Activated CD4-positive, alpha-beta T cell treated with anti-CD3 and anti-CD28 coated beads for 36 hours (primary cell): ENCODE measurements at regions of chr19 and their contacts with region 1.

Region 1: DNA sequence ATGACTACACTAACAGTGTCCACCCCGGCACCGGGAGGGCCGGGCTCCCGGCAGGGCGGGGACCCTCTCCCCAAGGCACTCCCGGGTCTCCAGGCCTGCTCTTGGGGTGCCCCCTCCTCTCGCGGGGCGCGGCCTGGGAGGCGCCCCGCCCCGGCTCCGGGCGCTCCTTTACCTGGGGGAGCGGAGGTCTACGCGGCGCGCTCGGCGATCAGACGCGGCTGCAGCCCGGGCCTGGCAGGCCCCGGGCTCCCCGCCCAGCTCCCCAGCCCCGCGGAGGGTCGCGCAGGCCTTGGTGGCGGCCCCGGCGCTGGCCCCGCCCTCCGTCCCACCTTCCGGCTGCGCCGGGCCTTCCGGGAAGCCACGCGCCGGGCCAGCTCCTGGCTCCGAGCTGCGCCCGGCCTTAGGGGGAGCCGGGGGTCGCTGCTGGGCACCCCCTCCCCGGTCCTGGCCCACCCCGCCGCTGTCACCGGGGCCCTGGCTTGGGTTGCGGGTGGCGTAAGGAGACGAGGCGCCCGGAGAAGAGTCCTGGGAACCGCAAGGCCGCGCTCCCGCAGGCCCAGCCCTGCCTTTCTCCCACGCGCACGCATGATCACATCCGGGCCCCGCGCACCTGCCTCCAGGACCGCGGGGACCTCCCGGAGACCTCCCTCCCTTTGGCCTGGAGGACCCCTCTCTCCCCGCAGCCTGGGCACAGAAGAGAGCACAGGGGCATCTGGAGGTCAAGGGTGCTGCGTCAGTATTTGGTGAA is at the start of gene C19orf12:
- DNase-seq: peak; percentile 82
- ATAC-seq: peak; percentile 56
- H3K4me3 Mint-ChIP-seq: peak within 1 kb of the TSS; percentile 92
- H3K27ac Mint-ChIP-seq: peak within 1 kb of the TSS; percentile 99
- H3K4me1 Mint-ChIP-seq: peaks cover 52% of the 10 kb centered on the region
- H3K27me3 Mint-ChIP-seq: no peaks in the 10 kb centered on the region
- total RNA-seq, gene C19orf12: 26.7 to 35.7 TPM

Region 2: DNA sequence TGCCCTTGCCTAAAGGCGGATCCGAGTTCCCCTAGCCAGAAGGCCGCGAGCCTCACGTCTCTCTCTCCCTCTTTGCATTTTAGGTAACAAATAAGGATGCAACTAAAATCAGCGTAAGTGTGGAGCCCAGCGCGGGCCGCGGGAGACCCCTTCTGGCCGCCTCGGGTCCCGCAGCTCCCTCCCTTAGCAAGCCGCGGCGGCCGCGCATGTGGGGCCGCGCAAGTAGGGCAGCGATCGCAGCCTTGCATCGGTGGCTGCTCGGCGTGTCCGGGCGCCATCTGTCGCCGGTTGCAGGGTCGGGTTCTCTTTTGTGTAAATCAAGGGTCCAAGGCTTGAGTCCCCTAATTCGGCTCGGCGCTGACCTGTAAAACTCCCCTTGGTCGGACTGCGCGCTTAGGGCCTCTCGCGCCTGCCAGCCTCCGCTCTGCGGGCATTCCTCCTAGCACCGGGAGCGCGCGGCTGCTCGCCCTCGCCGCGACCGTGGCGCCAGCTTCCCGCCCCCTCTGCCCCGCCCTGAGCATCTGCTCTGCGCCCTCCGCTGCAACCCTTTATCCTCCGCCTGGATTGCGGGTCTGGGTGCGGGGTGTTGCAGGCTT is 186.7 kb before region 1 on chr19:
- CTCF ChIA-PET with region 1: interaction called, 3 read pairs
- POLR2A ChIA-PET with region 1: no interaction called
- intact Hi-C with region 1: loop called in 1 of 2 experiments (anchors 2 kb)
- DNase-seq: peak; percentile 89
- ATAC-seq: peak; percentile 84
- H3K4me3 Mint-ChIP-seq: peak overlapping the region; percentile 52
- H3K27ac Mint-ChIP-seq: no peak overlapping the region
- H3K4me1 Mint-ChIP-seq: peaks cover 22% of the 10 kb centered on the region
- H3K27me3 Mint-ChIP-seq: peaks cover 63% of the 10 kb centered on the region

Region 3: DNA sequence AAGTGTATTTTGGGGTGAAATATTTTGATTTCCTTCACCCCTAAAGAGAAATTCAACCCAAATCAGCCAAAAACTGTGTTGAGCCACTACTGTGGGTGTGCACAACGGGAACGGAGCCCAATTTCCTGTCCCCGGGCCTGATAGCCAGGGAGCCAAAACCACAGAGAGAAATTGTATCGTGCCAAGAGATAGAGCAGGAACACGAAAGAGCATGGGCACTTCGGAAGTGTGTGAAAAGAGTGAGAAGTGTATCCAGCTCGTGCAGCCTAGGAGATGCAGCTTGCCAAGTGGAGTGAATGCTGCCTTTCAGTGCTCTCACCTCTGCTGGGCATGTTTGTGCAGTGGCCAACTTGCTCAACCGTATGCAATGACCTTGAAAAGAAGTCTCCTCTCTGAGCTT is 69.2 kb before region 1 on chr19:
- CTCF ChIA-PET with region 1: no interaction called
- POLR2A ChIA-PET with region 1: no interaction called
- intact Hi-C with region 1: no loop called
- DNase-seq: peak; percentile 26
- ATAC-seq: peak; percentile 44
- H3K4me3 Mint-ChIP-seq: no peak overlapping the region
- H3K27ac Mint-ChIP-seq: peak overlapping the region; percentile 48
- H3K4me1 Mint-ChIP-seq: peaks cover 16% of the 10 kb centered on the region
- H3K27me3 Mint-ChIP-seq: peaks cover 2% of the 10 kb centered on the region

Region 4: DNA sequence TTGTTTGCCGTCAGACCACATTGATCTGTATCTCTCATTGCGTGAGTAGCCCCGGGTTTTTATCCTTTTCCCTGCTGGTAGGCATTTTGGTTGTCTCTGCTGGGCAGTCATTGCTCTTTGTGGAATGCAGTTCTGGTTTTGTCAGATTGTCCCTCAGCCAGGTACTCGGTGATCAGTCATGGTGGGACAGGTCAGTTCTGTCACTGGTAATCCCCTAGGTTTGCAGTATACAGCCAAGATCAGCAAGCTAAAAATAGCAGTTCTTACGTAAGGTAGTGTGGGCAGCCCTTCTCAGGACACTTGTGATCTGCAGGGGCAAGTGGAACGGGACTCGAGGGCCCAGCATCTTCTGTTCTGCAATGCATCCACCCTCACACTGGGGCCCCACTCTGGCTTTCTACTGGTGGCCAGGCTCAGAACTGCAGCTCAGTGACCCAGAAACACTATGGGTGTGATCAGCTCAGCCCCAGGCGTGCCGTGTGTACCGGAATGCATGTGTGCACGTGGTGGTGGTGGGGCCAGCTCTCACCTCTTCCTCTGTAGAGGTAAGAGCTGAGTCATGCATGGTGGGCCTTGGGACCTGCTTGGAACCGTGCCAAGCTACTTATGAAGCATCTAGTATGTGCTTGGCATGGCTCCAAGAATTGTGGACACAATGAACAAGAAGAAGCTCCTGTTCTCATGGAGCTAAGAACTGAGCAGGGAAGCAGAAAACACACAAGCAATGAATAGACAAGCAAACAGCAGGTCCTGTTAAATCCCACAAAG is 43.5 kb before region 1 on chr19:
- CTCF ChIA-PET with region 1: interaction called, 55 read pairs
- POLR2A ChIA-PET with region 1: no interaction called
- intact Hi-C with region 1: loop called in 1 of 2 experiments (anchors 1 kb)
- DNase-seq: peak; percentile 94
- ATAC-seq: peak; percentile 70
- H3K4me3 Mint-ChIP-seq: peak overlapping the region; percentile 59
- H3K27ac Mint-ChIP-seq: peak overlapping the region; percentile 96
- H3K4me1 Mint-ChIP-seq: peaks cover 90% of the 10 kb centered on the region
- H3K27me3 Mint-ChIP-seq: no peaks in the 10 kb centered on the region

Region 5: DNA sequence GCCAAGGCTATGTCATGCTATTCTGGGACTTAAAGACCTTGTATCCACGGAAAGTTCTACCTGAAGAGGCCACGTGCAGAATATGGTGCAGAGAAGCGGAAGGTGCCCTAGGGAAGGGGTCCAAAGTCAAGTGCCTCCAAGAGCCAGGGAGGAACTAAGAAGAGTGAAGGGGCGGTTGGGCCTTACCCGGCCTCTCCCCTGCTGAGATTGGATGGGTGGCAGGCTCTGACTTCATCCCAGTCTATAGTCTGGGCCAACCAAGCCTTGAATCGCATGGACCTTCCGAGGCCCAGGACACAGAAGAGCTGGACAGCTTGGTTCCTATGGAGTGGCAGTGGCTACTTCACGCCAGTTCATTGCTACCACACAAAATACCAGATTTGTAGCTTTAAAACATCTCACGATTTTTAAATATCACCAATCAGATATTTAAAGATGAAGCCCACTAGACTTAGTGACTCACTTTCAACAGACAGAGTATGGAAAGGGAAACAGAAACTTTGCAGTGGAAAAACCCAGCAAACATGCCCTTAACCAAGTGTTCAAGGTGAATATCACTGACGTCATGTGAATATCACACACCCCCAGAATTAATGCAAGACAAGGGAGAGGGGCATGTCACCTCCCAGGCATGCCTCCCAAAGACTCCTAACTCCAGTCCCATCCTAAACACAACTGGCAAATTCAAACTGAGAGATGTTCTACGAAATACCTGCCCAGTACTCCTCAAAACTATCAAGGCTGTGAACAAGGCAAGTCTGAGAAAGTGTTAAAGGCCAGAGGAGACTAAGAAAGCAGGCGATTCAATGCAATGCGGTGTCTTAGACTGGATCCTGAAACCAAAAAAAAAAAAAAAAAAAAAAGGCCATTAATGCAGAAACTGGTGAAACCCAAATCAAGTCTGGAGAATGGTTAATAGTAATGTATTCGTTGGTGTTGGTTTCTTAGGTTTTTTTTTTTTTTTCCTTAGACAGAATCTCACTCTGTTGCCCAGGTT is 10.3 kb before region 1 on chr19:
- CTCF ChIA-PET with region 1: interaction called, 14 read pairs
- POLR2A ChIA-PET with region 1: interaction called, 7 read pairs
- intact Hi-C with region 1: loop called (anchors 1 kb)
- DNase-seq: peak; percentile 51
- ATAC-seq: peak; percentile 90
- H3K4me3 Mint-ChIP-seq: peak overlapping the region; percentile 26
- H3K27ac Mint-ChIP-seq: peak overlapping the region; percentile 97
- H3K4me1 Mint-ChIP-seq: peaks cover 49% of the 10 kb centered on the region
- H3K27me3 Mint-ChIP-seq: no peaks in the 10 kb centered on the region

Region 6: GRCh38 chr19:29837448-29837981 is 122.4 kb after region 1 on chr19:
- CTCF ChIA-PET with region 1: interaction called, 4 read pairs
- POLR2A ChIA-PET with region 1: interaction called, 5 read pairs
- intact Hi-C with region 1: loop called in 1 of 2 experiments (anchors 2 kb)
- DNase-seq: peak; percentile 76
- ATAC-seq: peak; percentile 81
- H3K4me3 Mint-ChIP-seq: peak overlapping the region; percentile 51
- H3K27ac Mint-ChIP-seq: peak overlapping the region; percentile 99
- H3K4me1 Mint-ChIP-seq: peaks cover 52% of the 10 kb centered on the region
- H3K27me3 Mint-ChIP-seq: no peaks in the 10 kb centered on the region